ENCODE measurements at regions of chr1 and their contacts with region 1.

Region 1: DNA sequence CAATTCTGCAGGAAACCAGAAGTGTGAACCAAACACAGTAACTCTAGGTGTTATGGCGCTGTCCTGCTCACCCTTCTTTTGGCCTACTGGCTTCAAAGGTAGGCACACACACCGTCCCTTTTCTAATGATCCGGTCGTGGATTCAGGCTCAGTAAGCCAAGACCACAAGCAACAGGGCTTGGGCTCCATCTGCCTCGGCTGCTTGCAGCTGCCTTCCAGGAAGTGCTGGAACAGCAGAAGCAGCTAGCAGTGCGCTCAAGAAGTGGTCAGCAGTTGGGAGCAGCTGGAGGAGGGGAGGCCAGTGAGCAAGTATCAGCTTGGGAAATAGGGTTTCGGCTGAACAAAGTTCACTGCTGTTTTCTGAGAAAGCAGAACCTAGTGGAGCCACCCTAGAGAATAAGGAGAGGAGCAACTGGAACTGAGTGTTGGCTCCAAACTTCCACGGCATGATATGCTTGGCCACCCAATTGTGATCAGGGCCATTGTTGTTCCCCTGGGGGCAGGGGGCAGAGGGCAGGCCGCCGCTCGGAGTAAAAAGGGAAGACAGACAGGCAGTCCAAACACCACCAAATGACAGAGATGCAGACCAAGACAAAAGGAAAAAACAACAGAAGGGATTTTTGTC is 173.4 kb downstream of the TOMM20 start:
- DNase-seq: no peak
- ATAC-seq: peak; percentile 63
- H3K4me3 ChIP-seq: no peak overlapping the region; the same call in 1 of the 2 replicates
- H3K27ac ChIP-seq: peak overlapping the region; percentile 93
- H3K4me1 ChIP-seq: peaks cover 48% of the 10 kb centered on the region
- H3K27me3 ChIP-seq: no peaks in the 10 kb centered on the region
- CTCF ChIP-seq: no peak
- EP300 ChIP-seq: peak in 1 of 2 experiments; percentile 33; a peak in 1 of 4 replicates
- POLR2A ChIP-seq: 0 out of 2 replicates have a peak, but pooled peaks have one; percentile 43
- RAD21 ChIP-seq: no peak

Region 2: GRCh38 chr1:234722904-234723720 is 232.1 kb before region 1 on chr1:
- CTCF ChIA-PET with region 1: no interaction called
- POLR2A ChIA-PET with region 1: interaction called, 10 read pairs
- RAD21 ChIA-PET with region 1: interaction called, 8 read pairs
- SMC1A ChIA-PET with region 1: interaction called, 4 read pairs
- in situ Hi-C with region 1: no loop called
- intact Hi-C with region 1: no loop called
- DNase-seq: no peak
- ATAC-seq: no peak
- H3K4me3 ChIP-seq: no peak overlapping the region
- H3K27ac ChIP-seq: peak overlapping the region; percentile 94
- H3K4me1 ChIP-seq: peaks cover 49% of the 10 kb centered on the region
- H3K27me3 ChIP-seq: no peaks in the 10 kb centered on the region
- CTCF ChIP-seq: no peak
- EP300 ChIP-seq: no peak
- POLR2A ChIP-seq: no peak
- RAD21 ChIP-seq: no peak

Region 3: GRCh38 chr1:234881893-234882771 is 73.1 kb before region 1 on chr1:
- CTCF ChIA-PET with region 1: interaction called, 3 read pairs
- POLR2A ChIA-PET with region 1: interaction called, 4 read pairs
- RAD21 ChIA-PET with region 1: interaction called, 18 read pairs
- SMC1A ChIA-PET with region 1: interaction called, 20 read pairs
- in situ Hi-C with region 1: no loop called
- intact Hi-C with region 1: loop called (anchors 2 kb)
- DNase-seq: peak; percentile 83
- ATAC-seq: peak; percentile 88
- H3K4me3 ChIP-seq: peak overlapping the region; percentile 53
- H3K27ac ChIP-seq: peak overlapping the region; percentile 73
- H3K4me1 ChIP-seq: peaks cover 50% of the 10 kb centered on the region
- H3K27me3 ChIP-seq: no peaks in the 10 kb centered on the region
- CTCF ChIP-seq: no peak
- EP300 ChIP-seq: peak; percentile 90 to 94
- POLR2A ChIP-seq: no peak
- RAD21 ChIP-seq: no peak

Region 4: GRCh38 chr1:234918181-234918841 is 36.9 kb before region 1 on chr1:
- CTCF ChIA-PET with region 1: no interaction called
- POLR2A ChIA-PET with region 1: no interaction called
- RAD21 ChIA-PET with region 1: no interaction called
- SMC1A ChIA-PET with region 1: no interaction called
- in situ Hi-C with region 1: no loop called
- intact Hi-C with region 1: no loop called
- DNase-seq: no peak
- ATAC-seq: no peak
- H3K4me3 ChIP-seq: no peak overlapping the region
- H3K27ac ChIP-seq: no peak overlapping the region
- H3K4me1 ChIP-seq: no peaks in the 10 kb centered on the region
- H3K27me3 ChIP-seq: no peaks in the 10 kb centered on the region
- CTCF ChIP-seq: no peak
- EP300 ChIP-seq: no peak
- POLR2A ChIP-seq: no peak
- RAD21 ChIP-seq: no peak

Region 5: GRCh38 chr1:234933475-234933874 is 21.7 kb before region 1 on chr1:
- CTCF ChIA-PET with region 1: interaction called, 12 read pairs
- POLR2A ChIA-PET with region 1: interaction called, 15 read pairs
- RAD21 ChIA-PET with region 1: interaction called, 48 read pairs
- SMC1A ChIA-PET with region 1: interaction called, 44 read pairs
- in situ Hi-C with region 1: no loop called
- intact Hi-C with region 1: no loop called
- DNase-seq: peak; percentile 85
- ATAC-seq: peak; percentile 95
- H3K4me3 ChIP-seq: peak overlapping the region; percentile 44; the same call in 1 of the 2 replicates
- H3K27ac ChIP-seq: peak overlapping the region; percentile 95
- H3K4me1 ChIP-seq: peaks cover 41% of the 10 kb centered on the region
- H3K27me3 ChIP-seq: no peaks in the 10 kb centered on the region
- CTCF ChIP-seq: no peak
- EP300 ChIP-seq: peak; percentile 75 to 81
- POLR2A ChIP-seq: peak; percentile 55; the same call in 1 of the 2 replicates
- RAD21 ChIP-seq: no peak

Region 6: GRCh38 chr1:234944439-234945344 is 10.5 kb before region 1 on chr1:
- CTCF ChIA-PET with region 1: interaction called, 6 read pairs
- POLR2A ChIA-PET with region 1: interaction called, 9 read pairs
- RAD21 ChIA-PET with region 1: interaction called, 6 read pairs
- SMC1A ChIA-PET with region 1: interaction called, 38 read pairs
- in situ Hi-C with region 1: no loop called
- intact Hi-C with region 1: no loop called
- DNase-seq: no peak
- ATAC-seq: peak; percentile 75
- H3K4me3 ChIP-seq: no peak overlapping the region
- H3K27ac ChIP-seq: peak overlapping the region; percentile 69
- H3K4me1 ChIP-seq: peaks cover 16% of the 10 kb centered on the region; the same call in 1 of the 2 replicates
- H3K27me3 ChIP-seq: no peaks in the 10 kb centered on the region
- CTCF ChIP-seq: no peak
- EP300 ChIP-seq: no peak; a peak in 1 of 4 replicates
- POLR2A ChIP-seq: no peak
- RAD21 ChIP-seq: no peak

Region 7: DNA sequence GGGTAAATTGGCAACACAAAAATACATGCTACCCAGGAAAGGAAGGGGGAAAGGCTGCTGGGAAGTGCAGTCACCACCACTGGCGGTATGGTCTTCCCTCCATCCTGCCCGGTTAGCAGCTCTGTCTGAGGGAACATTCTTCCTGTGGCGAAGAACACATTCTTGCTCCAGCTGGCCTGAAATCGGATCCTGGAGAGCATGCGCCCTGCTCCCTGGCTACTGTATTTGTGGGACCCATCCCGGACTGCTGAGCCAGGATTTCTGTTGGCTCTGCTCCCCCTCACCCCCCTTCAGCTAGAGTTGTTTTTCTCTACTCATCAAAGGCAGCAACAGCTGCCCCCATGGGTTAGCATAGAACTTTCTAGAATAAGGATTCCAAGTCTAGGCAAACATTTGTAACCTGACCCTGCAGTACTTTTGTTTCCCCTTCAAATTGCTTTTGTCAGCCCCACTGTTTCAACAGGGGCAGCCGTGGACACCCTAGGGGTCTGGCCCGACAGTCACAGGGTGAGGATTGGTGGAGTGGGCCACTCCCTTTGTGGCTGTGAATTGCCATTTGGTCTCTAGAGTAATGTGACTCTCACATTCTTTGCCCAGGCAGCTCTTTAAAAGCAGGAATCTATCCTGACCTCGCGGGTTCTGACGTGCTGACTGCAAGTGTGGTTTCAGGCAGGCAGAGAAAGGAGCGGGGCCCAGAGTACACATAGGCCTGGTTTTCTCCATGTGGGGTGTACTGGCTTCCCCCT is 15.7 kb after region 1 on chr1:
- CTCF ChIA-PET with region 1: interaction called, 5 read pairs
- POLR2A ChIA-PET with region 1: interaction called, 15 read pairs
- RAD21 ChIA-PET with region 1: interaction called, 258 read pairs
- SMC1A ChIA-PET with region 1: interaction called, 80 read pairs
- in situ Hi-C with region 1: no loop called
- intact Hi-C with region 1: loop called (anchors 1 kb)
- DNase-seq: no peak
- ATAC-seq: peak; percentile 72
- H3K4me3 ChIP-seq: no peak overlapping the region
- H3K27ac ChIP-seq: peak overlapping the region; percentile 95
- H3K4me1 ChIP-seq: peaks cover 60% of the 10 kb centered on the region
- H3K27me3 ChIP-seq: no peaks in the 10 kb centered on the region
- CTCF ChIP-seq: no peak
- EP300 ChIP-seq: peak in 1 of 2 experiments; percentile 87; a peak in 2 of 4 replicates
- POLR2A ChIP-seq: peak; percentile 31; the same call in 1 of the 2 replicates
- RAD21 ChIP-seq: 0 out of 2 replicates have a peak, but pooled peaks have one; percentile 4

Measured in GM12878 (cell line).